ENCODE measurements at regions of chr10 and their contacts with region 1.

Region 1: DNA sequence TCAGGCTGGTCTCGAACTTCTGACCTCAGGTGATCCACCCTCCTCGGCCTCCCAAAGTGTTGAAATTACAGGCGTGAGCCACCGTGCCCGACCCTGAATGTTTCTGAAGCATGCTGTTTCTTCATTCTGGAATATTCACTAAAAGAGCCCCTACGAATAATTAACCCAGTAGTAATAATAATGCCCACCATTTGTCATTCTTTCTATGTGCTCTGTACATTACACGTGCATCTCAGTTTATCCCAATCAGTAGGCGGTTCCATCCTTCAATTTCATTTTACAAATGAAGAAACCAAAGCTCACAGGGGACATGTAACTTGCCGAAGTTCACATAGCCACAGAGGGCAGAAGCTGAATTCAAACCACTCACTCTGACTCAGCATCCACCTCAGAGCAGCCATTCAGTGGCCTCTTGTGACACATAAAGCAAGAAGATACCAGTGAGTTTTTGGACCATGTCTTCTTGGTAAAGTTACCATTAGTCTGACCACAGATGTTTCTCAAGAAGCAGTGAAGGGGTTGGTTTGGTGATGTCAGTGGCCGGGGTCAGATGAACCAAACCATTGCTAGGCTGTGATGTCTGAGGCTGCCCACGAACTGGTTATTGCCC is 71.9 kb upstream of the DUSP5 start:
- DNase-seq: peak; percentile 53
- H3K4me3 Mint-ChIP-seq: peak overlapping the region; percentile 34
- H3K27ac Mint-ChIP-seq: peak overlapping the region; percentile 91
- H3K4me1 Mint-ChIP-seq: peaks cover 70% of the 10 kb centered on the region
- H3K27me3 Mint-ChIP-seq: no peaks in the 10 kb centered on the region

Region 2: GRCh38 chr10:110311357-110311949 is 114.3 kb before region 1 on chr10:
- intact Hi-C with region 1: loop called (anchors 2 kb)
- DNase-seq: no peak
- H3K4me3 Mint-ChIP-seq: no peak overlapping the region
- H3K27ac Mint-ChIP-seq: no peak overlapping the region
- H3K4me1 Mint-ChIP-seq: peaks cover 51% of the 10 kb centered on the region
- H3K27me3 Mint-ChIP-seq: no peaks in the 10 kb centered on the region

Region 3: GRCh38 chr10:110395725-110396651 is 29.8 kb before region 1 on chr10:
- intact Hi-C with region 1: loop called (anchors 1 kb)
- DNase-seq: peak; percentile 67
- H3K4me3 Mint-ChIP-seq: peak overlapping the region; percentile 15
- H3K27ac Mint-ChIP-seq: peak overlapping the region; percentile 77
- H3K4me1 Mint-ChIP-seq: peaks cover 75% of the 10 kb centered on the region
- H3K27me3 Mint-ChIP-seq: no peaks in the 10 kb centered on the region

Region 4: DNA sequence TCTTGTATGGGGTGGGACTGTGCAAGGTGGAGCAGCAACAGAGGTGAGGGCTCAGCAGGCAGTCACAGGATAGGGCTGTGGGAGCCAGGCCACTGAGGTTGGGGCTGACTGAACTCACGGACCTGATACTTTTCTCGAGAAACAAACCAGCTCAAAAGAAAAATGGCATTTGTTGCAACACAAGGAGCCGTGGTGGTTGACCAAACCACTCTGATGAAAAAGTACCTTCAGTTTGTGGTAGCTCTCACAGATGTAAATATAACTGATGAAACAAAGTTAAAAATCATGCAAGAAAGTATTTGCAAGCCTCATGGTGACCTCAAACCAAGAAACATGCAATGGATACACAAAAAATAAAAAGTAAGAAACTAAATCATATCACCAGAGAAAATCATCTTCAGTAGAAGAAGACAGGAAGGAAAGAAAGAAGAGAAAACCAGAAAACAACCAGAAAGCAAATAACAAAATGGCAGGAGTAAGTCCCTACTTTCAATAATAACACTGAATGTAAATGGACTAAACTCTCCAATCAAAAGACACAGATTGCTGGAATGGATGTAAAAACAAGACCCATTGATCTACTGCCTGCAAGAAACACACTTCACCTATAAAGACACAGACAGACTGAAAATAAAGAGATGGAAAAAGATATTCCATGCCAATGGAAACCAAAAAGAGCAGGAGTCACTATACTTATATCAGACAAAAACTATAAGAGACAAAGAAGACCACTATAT is 23.1 kb after region 1 on chr10:
- intact Hi-C with region 1: loop called (anchors 1 kb)
- DNase-seq: peak; percentile 35
- H3K4me3 Mint-ChIP-seq: no peak overlapping the region
- H3K27ac Mint-ChIP-seq: peak overlapping the region; percentile 93
- H3K4me1 Mint-ChIP-seq: peaks cover 28% of the 10 kb centered on the region
- H3K27me3 Mint-ChIP-seq: peaks cover 8% of the 10 kb centered on the region

Region 5: DNA sequence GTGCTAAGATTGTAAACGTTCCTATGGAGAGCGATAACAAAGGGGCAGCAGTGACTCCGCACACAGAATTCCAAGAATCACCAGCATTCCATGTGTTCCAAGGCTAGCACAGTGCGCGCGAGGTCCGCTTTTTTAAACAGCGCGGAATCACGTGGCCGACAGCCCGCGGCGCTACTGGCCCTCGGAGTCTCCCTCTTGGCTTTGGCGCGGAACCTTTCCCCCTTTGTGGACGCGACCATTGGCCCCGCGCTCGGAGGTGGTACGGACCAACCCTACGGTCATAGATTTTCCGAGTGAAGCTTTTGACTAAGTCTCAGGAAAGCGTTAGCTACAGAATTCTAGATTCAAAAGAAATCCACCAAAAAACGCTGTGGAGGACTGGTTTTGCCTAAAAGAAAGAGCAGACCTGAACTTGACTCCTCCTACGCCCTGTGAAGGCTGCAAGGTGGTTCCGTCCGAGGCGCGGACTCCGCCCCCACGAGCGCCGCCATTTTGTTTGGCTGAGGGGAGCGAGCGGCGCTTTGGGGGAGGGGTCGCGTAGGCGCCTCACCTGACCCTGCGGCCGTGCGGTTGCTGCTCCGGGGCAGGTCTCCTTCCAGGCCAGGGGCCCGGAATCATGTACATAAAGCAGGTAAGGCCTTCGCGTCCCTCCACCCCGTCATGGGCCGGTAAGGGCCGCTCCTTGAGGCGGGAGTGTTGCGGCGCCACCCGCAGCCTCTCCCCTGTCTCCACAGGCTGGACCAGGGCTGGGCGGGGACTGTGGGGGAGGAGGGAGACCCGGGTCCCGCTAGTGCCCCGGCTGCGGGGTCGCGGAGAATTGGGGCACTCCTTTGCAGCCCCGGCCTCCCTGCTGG is 141.6 kb after region 1 on chr10 and contains the start of gene SMC3:
- intact Hi-C with region 1: loop called (anchors 1 kb)
- DNase-seq: peak; percentile 89
- H3K4me3 Mint-ChIP-seq: peak within 1 kb of the TSS; percentile 93
- H3K27ac Mint-ChIP-seq: peak within 1 kb of the TSS; percentile 96
- H3K4me1 Mint-ChIP-seq: peaks cover 44% of the 10 kb centered on the region
- H3K27me3 Mint-ChIP-seq: peaks cover 14% of the 10 kb centered on the region
- total RNA-seq, gene SMC3: 74.5 and 77.9 TPM in 2 replicates

Measured in activated T-helper 1 cell treated with anti-CD3 and anti-CD28 coated beads, Interleukin-12 subunit alpha, Interleukin-12 subunit beta, Interleukin-2, Interleukin-4 antibody, amounts not matched to agents 30 ng/mL and 10 ng/mL and 1 ng/mL, durations not matched to agents 14 hours and 24 hours and 36 hours (primary cell).